WTC11 (cell line): ENCODE measurements at regions of chr5 and their contacts with region 1.

Region 1: GRCh38 chr5:180328296-180329137 is 24.6 kb downstream of the GFPT2 start:
- DNase-seq: peak; percentile 91
- ATAC-seq: peak; percentile 53
- H3K4me3 Mint-ChIP-seq: no peak overlapping the region
- H3K27ac Mint-ChIP-seq: peak overlapping the region; percentile 32
- H3K4me1 Mint-ChIP-seq: peaks cover 61% of the 10 kb centered on the region
- H3K27me3 Mint-ChIP-seq: no peaks in the 10 kb centered on the region
- CTCF ChIP-seq: peak; percentile 92

Region 2: GRCh38 chr5:180304431-180305375 is 23.8 kb before region 1 on chr5:
- CTCF ChIA-PET with region 1: interaction called, 11 read pairs
- POLR2A ChIA-PET with region 1: no interaction called
- DNase-seq: no peak
- ATAC-seq: no peak
- H3K4me3 Mint-ChIP-seq: no peak overlapping the region
- H3K27ac Mint-ChIP-seq: no peak overlapping the region; the same call in 1 of the 2 replicates
- H3K4me1 Mint-ChIP-seq: peaks cover 7% of the 10 kb centered on the region
- H3K27me3 Mint-ChIP-seq: no peaks in the 10 kb centered on the region
- CTCF ChIP-seq: no peak

Region 3: DNA sequence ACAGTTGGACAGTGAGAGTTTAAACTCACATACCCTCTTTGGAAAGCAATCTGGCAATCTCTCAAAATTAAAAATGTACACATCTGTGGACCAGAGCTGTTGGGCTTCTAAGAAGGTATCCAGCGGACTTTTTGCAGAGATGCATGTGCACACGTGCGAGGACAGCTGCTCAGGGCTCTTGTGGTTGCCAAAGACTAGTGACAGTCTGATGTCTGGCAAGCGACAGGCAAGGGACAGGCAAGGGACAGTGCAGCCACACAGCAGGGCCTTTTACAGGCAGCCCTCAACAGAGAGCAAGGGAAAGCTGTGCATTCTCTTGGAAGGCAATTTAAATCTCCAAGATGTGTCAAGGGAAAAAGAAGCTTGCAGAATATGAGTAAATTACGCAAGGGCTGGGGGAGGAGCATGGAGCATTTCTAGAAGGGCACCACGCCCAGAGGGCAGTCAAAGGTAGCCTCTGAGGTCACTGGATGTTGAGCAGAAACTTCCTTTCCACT is 15.4 kb after region 1 on chr5:
- CTCF ChIA-PET with region 1: interaction called, 53 read pairs
- POLR2A ChIA-PET with region 1: interaction called, 8 read pairs
- DNase-seq: no peak
- ATAC-seq: peak; percentile 10
- H3K4me3 Mint-ChIP-seq: peak overlapping the region; percentile 50
- H3K27ac Mint-ChIP-seq: peak overlapping the region; percentile 99
- H3K4me1 Mint-ChIP-seq: peaks cover 89% of the 10 kb centered on the region
- H3K27me3 Mint-ChIP-seq: no peaks in the 10 kb centered on the region
- CTCF ChIP-seq: no peak

Region 4: DNA sequence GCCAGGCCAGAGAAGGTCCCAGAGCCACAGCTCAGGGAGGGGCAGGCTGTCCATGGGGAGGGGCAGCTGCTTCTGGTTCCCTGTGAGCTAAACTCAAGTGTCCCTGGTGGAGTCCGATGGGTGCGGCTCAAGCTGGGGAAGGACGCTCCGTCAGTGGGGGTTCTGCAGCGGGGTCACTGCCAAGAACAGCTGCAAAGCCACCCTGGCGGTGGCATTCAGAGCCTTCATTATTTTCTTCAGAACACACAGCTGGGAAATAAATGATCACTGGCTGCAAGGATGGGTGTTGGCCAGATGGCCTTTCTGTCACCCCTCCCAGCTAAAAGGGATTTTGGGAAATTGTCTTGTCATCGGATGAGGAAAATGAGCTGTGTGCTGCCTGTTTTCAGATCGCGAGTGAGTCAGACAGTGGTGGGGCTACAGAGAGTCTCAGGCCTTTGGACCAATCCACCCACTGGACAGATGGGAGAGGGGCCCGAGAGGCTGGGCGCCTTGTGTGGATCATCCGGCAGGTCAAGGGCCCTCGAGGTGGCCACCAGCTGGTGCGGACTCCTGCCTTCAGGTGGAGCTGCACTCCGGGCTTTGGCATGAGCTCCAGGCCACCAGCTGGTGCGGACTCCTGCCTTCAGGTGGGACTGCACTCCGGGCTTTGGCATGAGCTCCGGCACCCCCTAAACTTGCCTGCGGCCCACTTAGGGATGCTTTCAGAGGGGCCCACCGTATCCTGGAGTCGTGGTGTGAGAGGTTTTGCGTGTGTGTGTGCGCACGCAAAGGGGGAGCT is 42.5 kb after region 1 on chr5:
- CTCF ChIA-PET with region 1: interaction called, 22 read pairs
- POLR2A ChIA-PET with region 1: no interaction called
- DNase-seq: no peak
- ATAC-seq: peak; percentile 43; the same call in 1 of the 2 replicates
- H3K4me3 Mint-ChIP-seq: no peak overlapping the region
- H3K27ac Mint-ChIP-seq: no peak overlapping the region
- H3K4me1 Mint-ChIP-seq: peaks cover 2% of the 10 kb centered on the region; the same call in 1 of the 2 replicates
- H3K27me3 Mint-ChIP-seq: no peaks in the 10 kb centered on the region
- CTCF ChIP-seq: no peak

Region 5: GRCh38 chr5:180470966-180471582 is 142.6 kb after region 1 on chr5:
- CTCF ChIA-PET with region 1: interaction called, 24 read pairs
- POLR2A ChIA-PET with region 1: no interaction called
- DNase-seq: peak; percentile 74
- ATAC-seq: peak; percentile 87
- H3K4me3 Mint-ChIP-seq: no peak overlapping the region
- H3K27ac Mint-ChIP-seq: no peak overlapping the region
- H3K4me1 Mint-ChIP-seq: peaks cover 8% of the 10 kb centered on the region
- H3K27me3 Mint-ChIP-seq: peaks cover 2% of the 10 kb centered on the region; the same call in 1 of the 2 replicates
- CTCF ChIP-seq: peak; percentile 97

Region 6: GRCh38 chr5:180507661-180508060 is 179.1 kb after region 1 on chr5:
- CTCF ChIA-PET with region 1: no interaction called
- POLR2A ChIA-PET with region 1: no interaction called
- DNase-seq: no peak
- ATAC-seq: no peak
- H3K4me3 Mint-ChIP-seq: no peak overlapping the region
- H3K27ac Mint-ChIP-seq: peak overlapping the region; percentile 57
- H3K4me1 Mint-ChIP-seq: peaks cover 22% of the 10 kb centered on the region
- H3K27me3 Mint-ChIP-seq: no peaks in the 10 kb centered on the region
- CTCF ChIP-seq: no peak